ENCODE measurements at regions of chr1 and their contacts with region 1.

Region 1: GRCh38 chr1:31182352-31182751 is 57.3 kb downstream of the NKAIN1 start:
- DNase-seq: peak; percentile 96
- H3K4me3 ChIP-seq: peak overlapping the region in 1 of 3 experiments; percentile 31
- H3K27ac ChIP-seq: no peak overlapping the region
- H3K4me1 ChIP-seq: peaks cover 13% of the 10 kb centered on the region
- H3K27me3 ChIP-seq: no peaks in the 10 kb centered on the region
- CTCF ChIP-seq: peak; percentile 16 to 57

Region 2: DNA sequence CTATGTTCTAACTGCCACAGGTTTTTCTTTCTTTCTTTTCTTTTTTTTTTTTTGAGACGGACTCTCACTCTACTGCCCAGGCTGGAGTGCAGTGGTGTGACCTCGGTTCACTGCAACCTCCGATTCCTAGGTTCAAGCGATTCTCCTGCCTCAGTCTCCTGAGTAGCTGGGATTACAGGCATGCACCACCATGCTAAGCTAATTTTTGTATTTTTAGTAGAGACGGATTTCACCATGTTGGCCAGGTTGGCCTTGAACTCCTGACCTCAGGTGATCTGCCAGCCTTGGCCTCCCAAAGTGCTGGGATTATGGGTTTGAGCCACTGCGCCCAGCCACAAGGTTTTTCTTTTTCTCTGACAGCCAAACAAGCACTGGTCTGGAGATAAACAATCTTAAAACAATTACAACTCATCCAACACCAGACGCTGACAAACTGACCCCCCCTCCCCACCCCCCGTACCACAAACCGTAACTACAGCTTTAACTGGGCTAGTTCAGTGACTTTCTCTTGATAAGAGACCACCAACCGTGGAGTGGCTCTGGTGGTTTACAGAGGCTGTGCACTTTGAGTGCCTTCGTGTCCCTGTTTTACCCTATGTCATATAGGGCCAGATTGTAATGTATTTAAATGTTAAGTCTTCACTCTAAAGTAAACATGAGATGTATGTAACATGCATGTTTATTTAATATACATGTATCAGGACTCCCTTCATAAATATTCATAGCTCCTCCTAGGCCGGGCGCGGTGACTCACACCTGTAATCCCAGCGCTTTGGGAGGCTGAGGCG is 97.4 kb before region 1 on chr1:
- CTCF ChIA-PET with region 1: no interaction called
- dilution Hi-C with region 1: no loop called
- in situ Hi-C with region 1: no loop called
- intact Hi-C with region 1: no loop called
- DNase-seq: no peak
- H3K4me3 ChIP-seq: no peak overlapping the region
- H3K27ac ChIP-seq: no peak overlapping the region
- H3K4me1 ChIP-seq: no peaks in the 10 kb centered on the region
- H3K27me3 ChIP-seq: no peaks in the 10 kb centered on the region
- CTCF ChIP-seq: no peak

Region 3: GRCh38 chr1:31239653-31240241 is 57.4 kb after region 1 on chr1 and contains the start of gene NKAIN1:
- CTCF ChIA-PET with region 1: no interaction called
- dilution Hi-C with region 1: no loop called
- in situ Hi-C with region 1: no loop called
- intact Hi-C with region 1: no loop called
- DNase-seq: peak; percentile 29
- H3K4me3 ChIP-seq: peak within 1 kb of the TSS in 2 of 3 experiments; percentile 30 to 34
- H3K27ac ChIP-seq: no peak within 1 kb of the TSS
- H3K4me1 ChIP-seq: peaks cover 9% of the 10 kb centered on the region
- H3K27me3 ChIP-seq: peaks cover 18% of the 10 kb centered on the region
- CTCF ChIP-seq: no peak
- total RNA-seq, gene NKAIN1: under 0.01 TPM in 1 of 2 donors, not detected in the other

Region 4: DNA sequence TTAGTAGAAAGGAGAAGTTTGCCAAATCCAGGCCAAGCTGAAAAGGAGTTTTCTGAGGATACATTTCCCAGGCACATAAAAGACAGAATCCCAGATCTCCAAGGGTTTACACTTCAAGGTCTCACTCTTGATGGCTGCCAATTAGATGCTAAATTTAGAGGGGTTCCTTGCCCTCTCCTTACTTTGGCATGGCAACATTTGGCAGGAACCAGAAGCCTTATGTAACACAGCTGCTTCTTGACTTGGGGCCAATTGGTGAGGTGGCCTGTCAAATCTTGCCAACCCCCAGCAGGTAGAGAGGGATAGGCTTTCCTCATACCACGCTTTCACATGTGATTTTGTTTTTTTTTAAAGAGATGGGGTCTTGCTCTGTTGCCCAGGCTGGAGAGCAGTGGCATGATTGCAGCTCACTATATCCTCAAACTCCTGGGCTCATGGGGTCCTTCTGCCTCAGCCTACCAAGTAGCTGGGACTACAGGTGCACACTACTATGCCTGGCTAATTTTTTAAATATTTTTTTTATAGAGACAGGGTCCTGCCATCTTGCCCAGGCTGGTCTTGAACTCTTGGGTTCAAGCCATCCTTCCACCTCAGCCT is 82.5 kb after region 1 on chr1:
- CTCF ChIA-PET with region 1: interaction called, 19 read pairs
- dilution Hi-C with region 1: no loop called
- in situ Hi-C with region 1: no loop called
- intact Hi-C with region 1: no loop called
- DNase-seq: no peak
- H3K4me3 ChIP-seq: no peak overlapping the region
- H3K27ac ChIP-seq: no peak overlapping the region
- H3K4me1 ChIP-seq: no peaks in the 10 kb centered on the region
- H3K27me3 ChIP-seq: no peaks in the 10 kb centered on the region
- CTCF ChIP-seq: no peak

Region 5: DNA sequence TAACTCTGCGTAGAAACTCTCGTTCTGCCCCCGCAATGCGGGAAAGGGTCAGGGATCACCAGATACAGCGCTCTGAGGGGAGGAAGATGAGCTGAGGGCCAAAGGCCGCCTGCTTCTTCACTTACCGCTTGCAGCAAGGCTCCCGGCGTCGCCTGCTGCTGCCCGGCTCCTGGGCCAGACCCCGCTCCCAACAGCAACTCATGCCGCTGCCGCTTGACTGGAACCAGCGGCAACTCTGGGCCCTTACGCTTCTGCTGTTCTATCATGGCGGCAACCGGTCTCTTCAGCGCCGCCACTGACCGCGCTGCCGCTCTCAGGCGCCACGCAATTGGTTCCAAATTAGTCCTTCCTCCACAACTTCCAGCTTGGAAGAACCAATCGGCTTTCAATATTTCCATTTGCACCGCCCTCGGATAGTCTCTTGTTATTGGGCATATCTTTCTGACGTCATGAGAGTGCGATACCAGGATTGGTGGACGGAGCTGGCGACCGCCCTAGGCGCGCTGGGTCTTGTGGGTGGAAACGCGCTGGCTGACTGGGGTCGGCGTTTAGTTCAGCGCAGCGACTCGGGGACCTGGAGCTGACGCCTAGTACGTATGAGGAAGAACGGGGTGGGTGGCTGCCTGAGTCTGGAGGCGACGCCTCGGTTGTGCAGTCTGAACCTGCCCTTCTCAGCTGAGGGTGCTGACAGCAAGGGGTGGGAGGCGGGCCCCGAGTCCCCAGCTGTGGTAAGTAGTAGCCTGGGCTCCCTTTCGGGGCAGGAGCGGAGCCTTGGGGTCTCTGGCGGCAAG is 114.3 kb after region 1 on chr1 and contains the starts of genes SNRNP40 and ZCCHC17:
- CTCF ChIA-PET with region 1: interaction called, 4 read pairs
- dilution Hi-C with region 1: no loop called
- in situ Hi-C with region 1: no loop called
- intact Hi-C with region 1: loop called (anchors 1 kb)
- DNase-seq: peak; percentile 100
- H3K4me3 ChIP-seq: peak within 1 kb of the TSS; percentile 82 to 96 (median 88)
- H3K27ac ChIP-seq: peak within 1 kb of the TSS; percentile 82
- H3K4me1 ChIP-seq: peaks cover 13% of the 10 kb centered on the region
- H3K27me3 ChIP-seq: no peaks in the 10 kb centered on the region
- CTCF ChIP-seq: peak in 1 of 2 donors; percentile 9
- total RNA-seq, gene SNRNP40: 50.9 to 69.8 TPM
- total RNA-seq, gene ZCCHC17: 47.5 to 49.7 TPM

Region 6: DNA sequence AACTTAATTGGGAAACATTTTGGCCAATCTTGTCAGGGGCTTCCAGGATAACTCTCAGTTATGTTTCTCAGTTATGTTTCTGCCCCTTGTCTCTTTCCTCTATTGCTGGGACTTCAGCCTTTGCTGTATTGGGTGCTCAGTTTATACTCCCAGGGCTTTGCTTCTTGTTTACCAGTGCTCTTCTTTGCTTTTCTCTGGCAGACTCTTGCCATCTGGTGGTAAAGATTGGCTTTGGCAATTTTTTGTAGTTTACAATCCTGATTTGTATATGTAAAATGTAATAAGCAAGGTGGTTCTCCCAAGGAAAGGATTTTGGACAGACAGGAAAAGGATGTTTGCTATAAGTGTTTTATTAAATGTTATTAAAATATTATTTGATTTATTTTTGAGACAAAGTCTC is 152.7 kb after region 1 on chr1:
- CTCF ChIA-PET with region 1: no interaction called
- dilution Hi-C with region 1: no loop called
- in situ Hi-C with region 1: loop called (anchors 5 to 10 kb)
- intact Hi-C with region 1: loop called (anchors 1 kb)
- DNase-seq: peak; percentile 37
- H3K4me3 ChIP-seq: no peak overlapping the region
- H3K27ac ChIP-seq: no peak overlapping the region
- H3K4me1 ChIP-seq: no peaks in the 10 kb centered on the region
- H3K27me3 ChIP-seq: no peaks in the 10 kb centered on the region
- CTCF ChIP-seq: peak; percentile 50 to 72

Region 7: GRCh38 chr1:31422505-31423319 is 240.4 kb after region 1 on chr1:
- CTCF ChIA-PET with region 1: interaction called, 3 read pairs
- dilution Hi-C with region 1: no loop called
- in situ Hi-C with region 1: no loop called
- intact Hi-C with region 1: loop called (anchors 1 kb)
- DNase-seq: peak; percentile 95
- H3K4me3 ChIP-seq: no peak overlapping the region
- H3K27ac ChIP-seq: peak overlapping the region; percentile 85
- H3K4me1 ChIP-seq: peaks cover 86% of the 10 kb centered on the region
- H3K27me3 ChIP-seq: no peaks in the 10 kb centered on the region
- CTCF ChIP-seq: peak; percentile 96 to 98

Measured in mammary epithelial cell (primary cell).